MCF 10A (cell line): ENCODE measurements at regions of chr1 and their contacts with region 1.

Region 1: GRCh38 chr1:174247472-174247871 is 88.2 kb downstream of the RABGAP1L start:
- DNase-seq: no peak
- H3K4me3 Mint-ChIP-seq: no peak overlapping the region
- H3K27ac Mint-ChIP-seq: no peak overlapping the region
- H3K4me1 Mint-ChIP-seq: no peaks in the 10 kb centered on the region
- H3K27me3 Mint-ChIP-seq: no peaks in the 10 kb centered on the region
- CTCF ChIP-seq: no peak

Region 2: GRCh38 chr1:174376030-174376429 is 128.6 kb after region 1 on chr1:
- CTCF ChIA-PET with region 1: interaction called, 10 read pairs
- POLR2A ChIA-PET with region 1: no interaction called
- intact Hi-C with region 1: no loop called
- DNase-seq: no peak
- H3K4me3 Mint-ChIP-seq: no peak overlapping the region
- H3K27ac Mint-ChIP-seq: no peak overlapping the region
- H3K4me1 Mint-ChIP-seq: no peaks in the 10 kb centered on the region
- H3K27me3 Mint-ChIP-seq: no peaks in the 10 kb centered on the region
- CTCF ChIP-seq: no peak